Endothelial cell of umbilical vein (primary cell): ENCODE measurements at regions of chr2 and their contacts with region 1.

Region 1: DNA sequence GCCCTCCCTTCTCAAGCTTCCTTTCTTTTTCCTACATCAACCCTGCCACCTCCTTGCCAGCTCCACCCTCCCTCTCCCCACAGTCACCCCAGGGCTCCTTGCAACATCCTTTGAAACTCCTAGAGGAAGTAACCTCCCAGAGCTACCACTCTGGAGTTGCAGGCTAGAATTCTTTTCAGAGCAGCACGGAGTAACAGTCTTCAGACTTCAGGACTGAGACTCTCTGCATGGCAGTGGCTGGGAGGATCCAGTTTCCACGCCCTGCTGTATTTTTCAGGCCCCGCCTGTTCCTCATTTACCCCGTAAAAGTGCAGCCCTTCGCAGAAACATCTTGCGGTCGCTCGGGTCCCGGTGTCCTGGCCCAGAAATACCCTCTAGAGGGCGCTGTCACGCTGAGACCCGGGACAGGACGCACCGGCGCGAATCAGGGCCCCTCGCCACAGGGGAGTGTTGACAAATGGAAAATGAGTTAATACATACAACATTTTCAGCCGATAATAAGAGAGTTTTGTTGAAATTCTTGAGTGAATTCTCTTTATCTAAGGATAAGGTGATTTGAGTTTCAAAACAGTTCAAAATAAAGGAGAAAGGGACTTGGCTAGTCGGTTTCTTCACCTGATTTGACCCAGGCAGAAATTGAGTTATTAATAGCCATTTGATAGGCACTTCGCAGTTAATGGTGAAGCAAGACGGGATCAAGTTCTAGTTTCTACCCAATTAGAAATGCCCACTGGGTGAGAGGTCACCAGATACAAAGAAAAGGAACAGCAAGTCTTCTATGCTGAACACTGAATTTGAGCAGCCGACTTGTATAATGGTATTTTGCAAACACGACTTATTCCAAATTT is 18.5 kb upstream of the NTSR2 start:
- DNase-seq: peak; percentile 84
- H3K4me3 ChIP-seq: peak overlapping the region in 1 of 3 experiments; percentile 7
- H3K27ac ChIP-seq: no peak overlapping the region
- H3K4me1 ChIP-seq: peaks cover 3% of the 10 kb centered on the region
- H3K27me3 ChIP-seq: peaks cover 4 to 8% of the 10 kb centered on the region in 2 experiments
- CTCF ChIP-seq: peak; percentile 88 to 91
- POLR2A ChIP-seq: no peak

Region 2: DNA sequence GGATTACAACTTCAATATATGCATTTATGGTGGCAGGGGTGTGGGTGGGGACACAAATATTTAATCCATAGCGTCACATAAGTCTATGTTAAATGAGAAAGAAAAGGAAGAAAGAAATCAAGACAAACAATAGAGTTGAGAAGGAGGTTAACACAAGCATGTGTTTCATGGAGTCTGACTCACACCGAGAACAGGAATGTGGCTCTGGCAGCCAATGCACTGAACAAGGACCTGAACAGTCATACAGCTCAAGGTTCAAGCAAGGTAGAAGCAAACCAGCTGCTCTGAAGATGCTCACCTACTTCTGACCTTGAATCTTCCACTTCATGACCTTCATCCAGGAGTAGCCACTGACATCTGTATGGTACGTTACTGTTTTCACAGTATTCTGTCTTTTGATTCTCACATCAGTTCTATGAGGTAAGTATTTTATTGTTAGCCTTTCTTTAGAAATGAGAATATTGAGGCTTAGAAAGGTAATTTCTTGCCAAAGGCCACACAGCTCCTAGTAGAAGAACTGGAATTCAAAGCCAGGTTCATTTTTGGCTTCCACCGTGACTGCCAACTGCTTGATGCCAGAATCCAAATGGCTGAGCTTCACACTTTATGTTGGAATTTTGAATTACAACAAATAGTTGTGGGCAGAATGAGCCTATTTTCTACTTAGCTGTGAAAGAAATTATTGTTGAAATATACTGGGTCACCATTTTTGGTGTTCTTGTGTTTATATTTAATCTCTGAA is 22.0 kb after region 1 on chr2:
- CTCF ChIA-PET with region 1: interaction called, 11 read pairs
- POLR2A ChIA-PET with region 1: no interaction called
- dilution Hi-C with region 1: no loop called
- intact Hi-C with region 1: no loop called
- DNase-seq: peak; percentile 78
- H3K4me3 ChIP-seq: no peak overlapping the region
- H3K27ac ChIP-seq: no peak overlapping the region
- H3K4me1 ChIP-seq: peaks cover 4% of the 10 kb centered on the region
- H3K27me3 ChIP-seq: no peaks in the 10 kb centered on the region
- CTCF ChIP-seq: no peak
- POLR2A ChIP-seq: no peak

Region 3: DNA sequence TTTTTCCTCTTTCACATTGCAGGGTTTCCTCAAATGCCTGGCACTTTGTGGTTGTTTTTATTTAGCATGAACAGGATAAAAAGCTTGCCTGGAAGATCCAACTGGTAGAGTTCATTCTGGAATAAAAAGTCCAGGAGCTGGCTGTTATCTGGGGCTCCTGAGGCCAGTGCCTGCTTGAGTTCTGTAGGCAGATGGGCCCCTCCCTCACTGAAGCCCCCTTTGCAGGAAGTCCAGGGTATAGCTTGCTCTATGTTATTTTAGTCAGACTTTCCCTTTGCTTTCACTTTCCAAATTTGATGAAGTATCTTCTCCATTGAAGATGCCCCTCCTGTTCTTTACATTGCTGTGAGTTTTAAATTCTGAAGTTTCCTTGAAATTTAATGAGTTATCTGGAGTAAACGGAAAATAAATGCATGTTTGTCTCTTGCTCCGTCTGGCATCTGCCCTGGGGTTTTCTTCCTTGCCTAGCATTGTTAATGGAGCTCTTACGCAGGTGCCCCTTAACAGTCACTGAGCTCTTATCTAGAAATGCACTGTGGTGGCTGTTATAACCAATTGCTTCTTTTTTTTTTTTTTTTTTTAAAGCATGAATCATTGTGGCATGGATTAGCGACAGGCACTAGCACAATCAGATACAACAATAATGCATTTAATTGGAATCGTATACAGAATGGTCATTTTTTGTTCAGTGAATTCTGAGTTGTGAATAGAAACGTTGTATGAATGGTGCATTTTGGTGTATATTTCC is 31.0 kb after region 1 on chr2:
- CTCF ChIA-PET with region 1: interaction called, 12 read pairs
- POLR2A ChIA-PET with region 1: no interaction called
- dilution Hi-C with region 1: no loop called
- intact Hi-C with region 1: no loop called
- DNase-seq: no peak
- H3K4me3 ChIP-seq: no peak overlapping the region
- H3K27ac ChIP-seq: no peak overlapping the region
- H3K4me1 ChIP-seq: no peaks in the 10 kb centered on the region
- H3K27me3 ChIP-seq: peaks cover 26 to 46% of the 10 kb centered on the region in 2 experiments
- CTCF ChIP-seq: no peak
- POLR2A ChIP-seq: no peak

Region 4: DNA sequence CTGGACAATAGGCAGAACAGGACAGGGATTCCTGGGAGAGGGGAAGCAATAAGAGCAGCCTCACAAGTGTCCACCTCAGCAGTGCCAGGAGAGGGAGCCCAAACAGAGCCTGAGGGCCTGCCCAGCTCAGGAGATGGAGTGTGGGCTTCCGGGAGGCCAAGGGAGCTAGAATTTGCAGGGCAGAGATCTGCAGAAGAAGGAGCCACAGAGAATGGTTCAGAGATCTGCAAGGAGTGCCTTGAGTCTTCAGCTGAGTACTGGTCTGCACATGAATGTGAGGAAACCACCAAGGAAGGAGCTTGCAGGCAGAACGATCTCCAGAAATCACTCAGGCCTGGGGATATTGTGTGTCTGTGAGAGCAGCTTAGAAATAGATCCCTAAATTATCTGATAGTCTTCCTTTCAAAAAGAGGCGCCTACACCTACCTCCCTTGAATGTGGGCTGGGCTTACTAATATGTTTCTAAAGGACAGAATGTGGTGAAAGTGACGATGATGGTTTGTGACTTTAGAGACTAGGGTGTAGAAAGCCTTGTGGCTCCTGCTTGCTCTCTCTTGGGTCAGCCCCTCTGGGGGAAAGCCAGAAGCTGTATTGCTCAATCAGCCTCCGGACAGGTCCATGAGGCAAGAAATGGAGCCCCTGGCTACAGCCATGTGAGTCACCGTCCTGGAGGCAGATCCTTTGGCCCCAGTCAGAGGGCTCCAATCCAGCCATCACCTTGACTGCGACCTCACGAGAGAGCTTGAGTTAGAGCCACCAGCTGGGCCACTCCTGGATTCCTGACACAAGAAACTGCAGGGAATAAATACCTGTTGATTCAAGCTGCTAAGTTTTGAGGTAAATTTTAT is 50.4 kb after region 1 on chr2:
- CTCF ChIA-PET with region 1: interaction called, 21 read pairs
- POLR2A ChIA-PET with region 1: interaction called, 3 read pairs
- dilution Hi-C with region 1: no loop called
- intact Hi-C with region 1: loop called (anchors 1 kb)
- DNase-seq: peak; percentile 52
- H3K4me3 ChIP-seq: no peak overlapping the region
- H3K27ac ChIP-seq: no peak overlapping the region
- H3K4me1 ChIP-seq: peaks cover 23% of the 10 kb centered on the region
- H3K27me3 ChIP-seq: peaks cover 6 to 10% of the 10 kb centered on the region in 2 experiments
- CTCF ChIP-seq: peak; percentile 47 to 71
- POLR2A ChIP-seq: no peak

Region 5: GRCh38 chr2:11753886-11754699 is 65.6 kb after region 1 on chr2:
- CTCF ChIA-PET with region 1: interaction called, 10 read pairs
- POLR2A ChIA-PET with region 1: no interaction called
- dilution Hi-C with region 1: no loop called
- intact Hi-C with region 1: no loop called
- DNase-seq: peak; percentile 86
- H3K4me3 ChIP-seq: peak overlapping the region in 1 of 3 experiments; percentile 41
- H3K27ac ChIP-seq: peak overlapping the region; percentile 78
- H3K4me1 ChIP-seq: peaks cover 30% of the 10 kb centered on the region
- H3K27me3 ChIP-seq: no peaks in the 10 kb centered on the region
- CTCF ChIP-seq: no peak
- POLR2A ChIP-seq: no peak

Region 6: GRCh38 chr2:11764359-11764758 is 75.9 kb after region 1 on chr2:
- CTCF ChIA-PET with region 1: interaction called, 9 read pairs
- POLR2A ChIA-PET with region 1: no interaction called
- dilution Hi-C with region 1: loop called (anchors 10 kb)
- intact Hi-C with region 1: no loop called
- DNase-seq: no peak
- H3K4me3 ChIP-seq: no peak overlapping the region
- H3K27ac ChIP-seq: no peak overlapping the region
- H3K4me1 ChIP-seq: peaks cover 5% of the 10 kb centered on the region
- H3K27me3 ChIP-seq: no peaks in the 10 kb centered on the region
- CTCF ChIP-seq: no peak
- POLR2A ChIP-seq: no peak

Region 7: DNA sequence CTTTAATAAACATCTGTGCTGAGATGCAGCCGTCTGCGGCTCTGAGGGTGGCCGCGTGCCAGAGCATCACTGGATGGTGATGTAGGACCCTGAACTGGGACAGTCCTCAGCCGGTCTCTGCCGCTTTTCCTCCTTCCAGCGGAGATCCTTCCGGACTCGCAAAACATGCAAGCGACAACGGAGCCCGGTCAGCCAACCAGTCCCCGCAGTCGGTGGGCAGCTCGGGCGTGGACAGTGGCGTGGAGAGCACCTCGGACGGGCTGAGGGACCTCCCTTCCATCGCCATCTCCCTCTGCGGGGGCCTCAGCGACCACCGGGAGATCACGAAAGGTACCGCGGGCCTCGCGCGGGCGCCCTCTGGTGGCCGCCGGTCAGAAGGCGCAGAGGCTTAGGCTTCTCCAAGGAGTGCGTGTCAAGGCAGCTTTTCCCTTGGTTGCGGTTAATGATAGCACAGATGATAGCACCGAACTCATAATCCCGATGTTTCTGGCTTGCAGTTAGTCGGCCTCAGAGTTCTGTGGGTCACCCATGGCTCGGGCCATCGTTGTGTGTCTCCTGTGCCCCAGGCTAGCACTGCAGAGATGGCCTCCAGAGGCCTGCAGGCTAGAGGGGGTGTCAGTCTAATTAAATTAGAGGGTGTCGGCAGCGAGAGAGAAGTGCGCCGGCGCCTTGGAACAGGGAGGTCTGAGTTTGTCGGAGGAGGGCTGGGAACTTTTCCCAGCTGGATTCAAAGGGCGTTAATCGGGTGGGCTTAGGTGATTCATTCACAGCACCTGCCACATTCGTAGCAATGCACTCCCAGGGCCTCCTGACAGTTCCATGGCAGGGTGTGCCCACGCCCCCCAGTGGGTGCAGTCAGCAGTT is 96.5 kb after region 1 on chr2:
- CTCF ChIA-PET with region 1: interaction called, 188 read pairs
- POLR2A ChIA-PET with region 1: no interaction called
- dilution Hi-C with region 1: no loop called
- intact Hi-C with region 1: loop called (anchors 1 kb)
- DNase-seq: peak; percentile 49
- H3K4me3 ChIP-seq: peak overlapping the region in 1 of 3 experiments; percentile 26
- H3K27ac ChIP-seq: no peak overlapping the region
- H3K4me1 ChIP-seq: no peaks in the 10 kb centered on the region
- H3K27me3 ChIP-seq: no peaks in the 10 kb centered on the region
- CTCF ChIP-seq: peak; percentile 94 to 99
- POLR2A ChIP-seq: no peak